PC-9 (cell line): ENCODE measurements at regions of chr3 and their contacts with region 1.

Region 1: GRCh38 chr3:44510000-44510368 is 32.5 kb upstream of the ZNF445 start:
- DNase-seq: no peak
- H3K4me3 ChIP-seq: peak overlapping the region; percentile 94
- H3K27ac ChIP-seq: no peak overlapping the region
- H3K4me1 ChIP-seq: peaks cover 7% of the 10 kb centered on the region
- H3K27me3 ChIP-seq: no peaks in the 10 kb centered on the region
- CTCF ChIP-seq: no peak

Region 2: GRCh38 chr3:44624749-44625480 is 114.9 kb after region 1 on chr3 and contains the start of gene ZNF197:
- CTCF ChIA-PET with region 1: no interaction called
- POLR2A ChIA-PET with region 1: no interaction called
- intact Hi-C with region 1: loop called (anchors 10 kb)
- DNase-seq: peak; percentile 67 to 74
- H3K4me3 ChIP-seq: peak within 1 kb of the TSS; percentile 65
- H3K27ac ChIP-seq: no peak within 1 kb of the TSS
- H3K4me1 ChIP-seq: no peaks in the 10 kb centered on the region; the same call in 1 of the 2 replicates
- H3K27me3 ChIP-seq: no peaks in the 10 kb centered on the region
- CTCF ChIP-seq: no peak
- total RNA-seq, gene ZNF197: 7.4 and 9.5 TPM in 2 replicates